Breast epithelium (tissue), 4 donors: ENCODE measurements at regions of chrX and their contacts with region 1.

Region 1: DNA sequence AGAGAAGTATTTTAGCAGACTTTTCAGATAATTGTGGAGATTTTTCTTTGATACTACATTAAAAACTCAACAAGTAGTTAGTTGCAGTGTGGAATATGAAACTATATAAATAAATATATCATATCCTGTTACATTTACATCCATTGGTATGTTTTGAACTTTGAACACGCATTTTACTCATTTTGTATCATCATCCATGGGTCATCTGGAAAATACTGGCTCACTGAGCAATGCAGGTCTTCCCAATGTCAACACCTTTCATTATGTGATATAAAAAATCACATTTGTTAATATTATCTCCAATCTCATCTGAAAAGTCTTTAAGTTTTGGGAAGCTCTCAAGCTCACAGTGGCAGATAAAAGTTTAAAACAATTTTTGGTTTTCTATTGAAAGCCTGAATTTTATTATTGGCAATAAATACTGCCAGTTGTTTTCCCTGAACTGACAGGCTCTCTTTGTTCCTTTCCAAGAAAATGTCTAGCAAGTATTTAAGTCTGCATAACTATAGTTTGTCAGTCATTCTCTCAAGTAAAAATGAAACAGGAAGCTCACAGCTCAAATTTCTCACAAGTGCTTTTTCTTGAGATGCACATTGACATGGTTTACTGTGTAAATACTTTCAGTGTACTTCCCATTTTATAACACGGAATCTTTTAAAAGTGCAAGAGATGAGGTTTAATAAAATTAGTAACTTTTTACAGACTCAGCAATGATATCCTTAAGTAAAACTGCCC is 183.5 kb upstream of the GPC4 start:
- DNase-seq: no peak
- H3K4me3 ChIP-seq: no peak overlapping the region
- H3K27ac ChIP-seq: no peak overlapping the region
- H3K4me1 ChIP-seq: no peaks in the 10 kb centered on the region
- H3K27me3 ChIP-seq: peaks cover 0 to 36% of the 10 kb centered on the region in 2 donors
- CTCF ChIP-seq: no peak
- POLR2A ChIP-seq: no peak

Region 2: DNA sequence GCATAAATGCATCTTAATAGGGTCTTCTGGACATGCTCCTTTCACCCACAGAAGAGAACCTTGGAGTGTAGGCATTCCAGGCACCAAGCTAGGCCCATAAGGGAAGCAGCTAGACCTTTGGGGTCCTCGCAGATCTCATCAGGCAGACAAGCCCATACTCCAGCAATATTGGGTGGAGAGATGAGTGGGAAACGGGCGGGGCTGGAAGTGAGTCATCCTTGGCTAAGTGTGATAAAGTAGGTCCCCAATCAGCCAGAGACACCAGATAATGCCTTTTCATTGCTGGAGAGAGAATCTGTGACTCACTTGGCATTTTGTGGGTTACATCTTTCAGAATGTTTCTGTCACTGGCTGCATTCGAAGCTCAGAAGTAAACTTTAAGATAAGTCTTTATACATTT is 976.6 kb before region 1 on chrX:
- intact Hi-C with region 1: loop called (anchors 5 kb)
- DNase-seq: no peak
- H3K4me3 ChIP-seq: no peak overlapping the region
- H3K27ac ChIP-seq: no peak overlapping the region
- H3K4me1 ChIP-seq: no peaks in the 10 kb centered on the region
- H3K27me3 ChIP-seq: peaks cover 0 to 58% of the 10 kb centered on the region in 2 donors
- CTCF ChIP-seq: no peak
- POLR2A ChIP-seq: no peak